A673 (cell line): ENCODE measurements at regions of chr19 and their contacts with region 1.

Region 1: GRCh38 chr19:36378625-36379509 is at the start of gene ZFP14:
- DNase-seq: peak; percentile 95
- H3K4me3 ChIP-seq: peak within 1 kb of the TSS; percentile 63
- H3K27ac ChIP-seq: peak within 1 kb of the TSS; percentile 77
- H3K4me1 ChIP-seq: peaks cover 9% of the 10 kb centered on the region
- H3K27me3 ChIP-seq: no peaks in the 10 kb centered on the region
- CTCF ChIP-seq: peak; percentile 38; the same call in 1 of the 2 replicates
- total RNA-seq, gene ZFP14: 5.2 and 5.4 TPM in 2 replicates

Region 2: DNA sequence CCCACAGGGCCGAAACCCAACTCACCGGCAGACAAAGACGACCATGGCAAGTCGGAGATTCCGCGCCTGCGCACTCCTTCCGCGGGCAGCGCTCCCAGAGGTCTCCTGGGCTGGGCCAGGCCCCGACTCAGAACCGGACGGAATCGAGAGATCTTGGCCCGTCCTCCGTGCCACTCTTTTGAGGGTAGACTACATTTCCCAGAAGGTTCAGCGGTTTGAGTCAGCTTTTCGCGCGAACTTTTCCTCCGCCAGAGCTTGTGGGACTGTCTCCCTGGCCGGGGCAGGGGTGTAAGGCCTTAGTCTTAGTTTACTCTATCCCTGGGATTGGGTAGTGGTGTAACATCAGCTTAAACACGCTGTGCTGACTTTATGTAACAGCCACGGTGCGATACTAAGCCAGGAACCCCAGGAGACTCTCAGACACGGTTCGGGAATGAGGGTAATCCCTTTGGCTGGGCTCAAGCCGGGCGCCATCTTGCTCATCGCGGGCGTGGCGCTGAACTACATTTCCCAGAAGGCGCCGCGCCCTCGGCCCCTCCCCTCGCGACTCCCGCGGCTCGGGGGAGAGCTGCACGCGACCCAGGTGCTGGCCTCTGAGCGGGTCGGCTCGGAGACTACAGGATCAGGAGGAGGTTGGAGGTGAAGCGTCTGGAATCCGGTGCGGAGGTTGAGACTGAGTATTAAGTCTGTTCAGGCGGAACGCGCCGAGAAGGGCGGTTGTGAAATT is 149.5 kb after region 1 on chr19 and contains the start of gene ZNF260:
- CTCF ChIA-PET with region 1: no interaction called
- POLR2A ChIA-PET with region 1: no interaction called
- intact Hi-C with region 1: loop called (anchors 5 kb)
- DNase-seq: peak; percentile 94
- H3K4me3 ChIP-seq: peak within 1 kb of the TSS; percentile 77
- H3K27ac ChIP-seq: peak within 1 kb of the TSS; percentile 90
- H3K4me1 ChIP-seq: no peaks in the 10 kb centered on the region
- H3K27me3 ChIP-seq: no peaks in the 10 kb centered on the region
- CTCF ChIP-seq: no peak
- total RNA-seq, gene ZNF260: 18.0 and 20.4 TPM in 2 replicates

Region 3: GRCh38 chr19:36719687-36720556 is 341.1 kb after region 1 on chr19:
- CTCF ChIA-PET with region 1: no interaction called
- POLR2A ChIA-PET with region 1: interaction called, 26 read pairs
- intact Hi-C with region 1: no loop called
- DNase-seq: no peak
- H3K4me3 ChIP-seq: no peak overlapping the region
- H3K27ac ChIP-seq: no peak overlapping the region
- H3K4me1 ChIP-seq: no peaks in the 10 kb centered on the region
- H3K27me3 ChIP-seq: no peaks in the 10 kb centered on the region
- CTCF ChIP-seq: no peak

Region 4: GRCh38 chr19:36797786-36798108 is 418.9 kb after region 1 on chr19:
- CTCF ChIA-PET with region 1: no interaction called
- POLR2A ChIA-PET with region 1: no interaction called
- intact Hi-C with region 1: no loop called
- DNase-seq: no peak
- H3K4me3 ChIP-seq: peak overlapping the region; percentile 59
- H3K27ac ChIP-seq: no peak overlapping the region
- H3K4me1 ChIP-seq: no peaks in the 10 kb centered on the region
- H3K27me3 ChIP-seq: no peaks in the 10 kb centered on the region
- CTCF ChIP-seq: no peak